Endothelial cell of umbilical vein (primary cell): ENCODE measurements at regions of chr11 and their contacts with region 1.

Region 1: GRCh38 chr11:33376331-33377310 is 119.4 kb downstream of the HIPK3 start:
- DNase-seq: peak; percentile 25
- H3K4me3 ChIP-seq: peak overlapping the region; percentile 68 to 84 (median 79)
- H3K27ac ChIP-seq: peak overlapping the region; percentile 70
- H3K4me1 ChIP-seq: peaks cover 45% of the 10 kb centered on the region
- H3K27me3 ChIP-seq: no peaks in the 10 kb centered on the region
- CTCF ChIP-seq: no peak
- POLR2A ChIP-seq: no peak

Region 2: DNA sequence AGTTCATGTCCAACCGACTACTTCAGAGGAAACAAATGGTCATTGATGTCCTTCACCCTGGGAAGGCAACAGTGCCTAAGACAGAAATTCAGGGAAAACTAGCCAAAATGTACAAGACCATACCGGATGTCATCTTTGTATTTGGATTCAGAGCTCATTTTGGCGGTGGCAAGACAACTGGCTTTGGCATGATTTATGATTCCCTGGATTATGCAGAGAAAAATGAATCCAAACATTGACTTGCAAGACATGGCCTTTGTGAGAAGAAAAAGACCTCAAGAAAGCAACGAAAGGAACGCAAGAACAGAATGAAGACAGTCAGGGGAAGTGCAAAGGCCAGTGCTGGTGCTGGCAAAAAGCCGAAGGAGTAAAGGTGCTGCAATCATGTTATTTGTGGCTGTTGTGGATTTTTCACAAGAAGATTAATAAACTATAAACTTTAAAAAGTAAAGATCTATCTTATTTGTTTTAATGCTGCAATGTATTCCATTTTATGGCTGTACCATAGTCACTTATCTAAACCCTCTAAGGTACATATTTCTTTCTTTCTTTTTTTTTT is 139.5 kb before region 1 on chr11:
- CTCF ChIA-PET with region 1: no interaction called
- POLR2A ChIA-PET with region 1: no interaction called
- dilution Hi-C with region 1: no loop called
- intact Hi-C with region 1: no loop called
- DNase-seq: no peak
- H3K4me3 ChIP-seq: no peak overlapping the region
- H3K27ac ChIP-seq: no peak overlapping the region
- H3K4me1 ChIP-seq: peaks cover 10% of the 10 kb centered on the region
- H3K27me3 ChIP-seq: peaks cover 0 to under 1% of the 10 kb centered on the region in 2 experiments
- CTCF ChIP-seq: no peak
- POLR2A ChIP-seq: no peak

Region 3: GRCh38 chr11:33389635-33390034 is 13.0 kb after region 1 on chr11:
- CTCF ChIA-PET with region 1: no interaction called
- POLR2A ChIA-PET with region 1: no interaction called
- dilution Hi-C with region 1: no loop called
- intact Hi-C with region 1: no loop called
- DNase-seq: no peak
- H3K4me3 ChIP-seq: no peak overlapping the region
- H3K27ac ChIP-seq: no peak overlapping the region
- H3K4me1 ChIP-seq: peaks cover 4% of the 10 kb centered on the region
- H3K27me3 ChIP-seq: no peaks in the 10 kb centered on the region
- CTCF ChIP-seq: no peak
- POLR2A ChIP-seq: no peak

Region 4: GRCh38 chr11:33452836-33453624 is 76.4 kb after region 1 on chr11:
- CTCF ChIA-PET with region 1: no interaction called
- POLR2A ChIA-PET with region 1: no interaction called
- dilution Hi-C with region 1: no loop called
- intact Hi-C with region 1: loop called (anchors 2 kb)
- DNase-seq: peak; percentile 74
- H3K4me3 ChIP-seq: no peak overlapping the region
- H3K27ac ChIP-seq: peak overlapping the region; percentile 34
- H3K4me1 ChIP-seq: peaks cover 30% of the 10 kb centered on the region
- H3K27me3 ChIP-seq: no peaks in the 10 kb centered on the region
- CTCF ChIP-seq: no peak
- POLR2A ChIP-seq: no peak

Region 5: GRCh38 chr11:33478111-33478573 is 101.5 kb after region 1 on chr11:
- CTCF ChIA-PET with region 1: no interaction called
- POLR2A ChIA-PET with region 1: no interaction called
- dilution Hi-C with region 1: no loop called
- intact Hi-C with region 1: no loop called
- DNase-seq: no peak
- H3K4me3 ChIP-seq: no peak overlapping the region
- H3K27ac ChIP-seq: no peak overlapping the region
- H3K4me1 ChIP-seq: peaks cover 6% of the 10 kb centered on the region
- H3K27me3 ChIP-seq: peaks cover 0 to 2% of the 10 kb centered on the region in 2 experiments
- CTCF ChIP-seq: no peak
- POLR2A ChIP-seq: no peak

Region 6: DNA sequence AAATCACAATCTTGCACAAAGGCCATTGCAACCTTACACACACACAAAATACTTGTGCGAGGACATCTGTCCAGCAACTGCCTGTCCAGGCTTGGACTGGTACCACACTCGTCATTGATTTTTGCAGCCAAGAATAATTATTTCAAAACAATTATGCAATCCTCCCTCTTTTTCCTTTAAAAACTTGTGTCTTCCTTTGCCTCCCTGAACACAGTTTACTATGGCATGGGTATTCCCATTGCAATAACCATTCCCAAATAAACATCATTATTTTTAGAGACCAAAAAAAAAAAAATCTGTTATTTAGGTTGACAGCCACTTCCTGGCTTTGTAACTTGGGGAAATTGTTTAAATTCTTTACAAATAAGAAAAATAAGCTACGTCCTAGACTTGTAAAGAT is 270.0 kb after region 1 on chr11:
- CTCF ChIA-PET with region 1: no interaction called
- POLR2A ChIA-PET with region 1: no interaction called
- dilution Hi-C with region 1: no loop called
- intact Hi-C with region 1: loop called (anchors 2 kb)
- DNase-seq: peak; percentile 59
- H3K4me3 ChIP-seq: no peak overlapping the region
- H3K27ac ChIP-seq: peak overlapping the region; percentile 3
- H3K4me1 ChIP-seq: peaks cover 9% of the 10 kb centered on the region
- H3K27me3 ChIP-seq: no peaks in the 10 kb centered on the region
- CTCF ChIP-seq: no peak
- POLR2A ChIP-seq: no peak